Activated T-helper 1 cell treated with anti-CD3 and anti-CD28 coated beads, Interleukin-12 subunit alpha, Interleukin-12 subunit beta, Interleukin-2, Interleukin-4 antibody, amounts not matched to agents 30 ng/mL and 10 ng/mL and 1 ng/mL, durations not matched to agents 14 hours and 24 hours and 36 hours (primary cell): ENCODE measurements at regions of chr9 and their contacts with region 1.

Region 1: GRCh38 chr9:36036780-36037548 is at the start of gene RECK:
- DNase-seq: peak; percentile 84
- H3K4me3 Mint-ChIP-seq: peak within 1 kb of the TSS; percentile 90
- H3K27ac Mint-ChIP-seq: peak within 1 kb of the TSS; percentile 80
- H3K4me1 Mint-ChIP-seq: peaks cover 34% of the 10 kb centered on the region
- H3K27me3 Mint-ChIP-seq: peaks cover 24% of the 10 kb centered on the region
- total RNA-seq, gene RECK: 3.8 and 4.4 TPM in 2 replicates

Region 2: DNA sequence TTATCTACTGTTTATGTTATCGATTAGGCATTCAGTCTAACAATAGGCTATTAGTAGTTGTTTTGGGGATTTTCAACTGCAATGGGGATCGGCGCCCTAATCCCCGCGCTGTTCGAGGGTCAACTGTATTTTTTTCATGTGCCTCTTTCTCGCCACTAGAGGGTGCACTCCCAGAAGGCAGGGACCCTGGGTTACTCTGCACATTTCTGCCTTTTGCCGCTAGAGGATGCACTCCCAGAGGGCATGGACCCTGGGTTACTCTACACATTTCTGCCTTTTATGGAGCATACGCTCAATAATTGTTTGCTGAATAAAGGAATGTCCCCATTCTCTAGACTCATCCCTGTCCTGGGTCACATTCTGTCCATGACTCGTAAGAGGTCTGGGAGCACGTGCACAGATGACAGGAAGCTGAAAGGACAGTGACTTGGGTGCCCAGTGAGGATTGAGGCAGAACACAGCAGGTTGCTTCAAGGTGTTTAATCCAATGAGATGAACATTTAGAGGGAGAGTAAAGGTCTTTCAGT is 28.1 kb before region 1 on chr9:
- intact Hi-C with region 1: loop called (anchors 2 kb)
- DNase-seq: peak; percentile 42
- H3K4me3 Mint-ChIP-seq: no peak overlapping the region
- H3K27ac Mint-ChIP-seq: no peak overlapping the region
- H3K4me1 Mint-ChIP-seq: peaks cover 14% of the 10 kb centered on the region
- H3K27me3 Mint-ChIP-seq: peaks cover 19% of the 10 kb centered on the region

Region 3: GRCh38 chr9:36051317-36051716 is 14.4 kb after region 1 on chr9:
- intact Hi-C with region 1: loop called (anchors 2 kb)
- DNase-seq: no peak
- H3K4me3 Mint-ChIP-seq: no peak overlapping the region
- H3K27ac Mint-ChIP-seq: no peak overlapping the region
- H3K4me1 Mint-ChIP-seq: no peaks in the 10 kb centered on the region
- H3K27me3 Mint-ChIP-seq: no peaks in the 10 kb centered on the region

Region 4: DNA sequence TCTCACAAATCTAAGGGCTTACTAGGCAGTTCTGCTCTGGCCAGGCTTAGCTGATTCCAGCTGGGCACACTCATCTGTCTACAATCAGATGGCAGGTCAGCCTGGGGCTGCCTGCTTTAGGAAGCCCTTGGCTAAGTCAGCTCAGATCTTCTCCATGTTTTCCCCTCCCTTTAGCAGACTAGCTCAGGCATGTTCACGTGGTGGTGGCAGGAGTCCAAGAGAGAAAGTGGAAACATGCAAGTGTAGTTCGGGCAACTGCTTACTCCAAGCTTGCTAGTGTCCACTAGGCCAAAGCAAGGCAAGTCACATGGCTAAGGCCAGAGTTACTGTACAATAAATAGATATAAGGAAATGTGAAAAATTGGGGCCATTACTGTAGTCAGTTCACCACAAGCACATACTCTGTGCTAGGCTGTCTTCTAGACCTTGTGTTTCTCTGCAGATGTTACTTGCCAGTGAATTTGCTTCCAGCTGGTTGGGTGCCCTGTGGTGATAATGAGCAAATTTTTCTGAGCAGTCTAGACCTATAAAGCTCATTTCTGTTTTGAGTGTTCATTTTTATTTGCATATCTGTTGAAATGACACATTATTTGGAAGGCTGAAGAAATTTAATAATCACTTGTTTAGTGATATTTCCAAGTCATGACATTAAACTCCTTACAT is 38.0 kb after region 1 on chr9:
- intact Hi-C with region 1: no loop called
- DNase-seq: no peak
- H3K4me3 Mint-ChIP-seq: no peak overlapping the region
- H3K27ac Mint-ChIP-seq: no peak overlapping the region
- H3K4me1 Mint-ChIP-seq: no peaks in the 10 kb centered on the region
- H3K27me3 Mint-ChIP-seq: no peaks in the 10 kb centered on the region

Region 5: DNA sequence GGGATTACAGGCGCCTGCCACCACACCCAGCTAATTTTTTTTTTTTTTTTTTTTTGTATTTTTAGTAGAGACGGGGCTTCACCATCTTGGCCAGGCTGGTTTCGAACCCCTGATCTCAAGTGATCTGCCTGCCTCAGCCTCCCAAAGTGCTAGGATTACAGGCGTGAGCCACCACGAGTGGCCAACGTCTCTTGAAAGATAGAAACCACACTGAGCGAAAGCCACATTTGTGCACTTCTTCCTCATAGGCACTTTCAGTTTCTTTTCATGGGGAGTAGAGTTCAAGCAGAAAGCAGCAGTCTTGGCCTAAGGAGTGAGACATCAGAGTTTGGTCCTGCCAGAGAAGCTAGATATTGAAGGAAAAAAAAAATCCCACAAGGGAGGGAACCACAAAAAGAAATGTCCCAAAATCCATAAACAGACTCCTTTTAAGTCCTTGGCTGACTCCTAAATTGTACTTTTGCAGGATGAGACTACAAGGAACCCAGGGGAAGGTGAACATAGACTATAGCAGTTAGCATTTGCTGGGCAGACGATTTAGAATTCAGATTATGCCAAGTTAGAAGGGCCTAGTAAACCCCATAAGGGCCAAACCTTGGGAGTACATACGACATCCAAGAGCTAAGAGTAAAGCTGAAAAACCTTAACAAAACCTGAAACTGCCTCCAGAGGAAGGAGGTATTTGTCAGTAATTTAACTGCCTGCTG is 55.7 kb after region 1 on chr9:
- intact Hi-C with region 1: loop called (anchors 5 kb)
- DNase-seq: peak; percentile 49
- H3K4me3 Mint-ChIP-seq: no peak overlapping the region
- H3K27ac Mint-ChIP-seq: peak overlapping the region; percentile 82
- H3K4me1 Mint-ChIP-seq: peaks cover 20% of the 10 kb centered on the region
- H3K27me3 Mint-ChIP-seq: no peaks in the 10 kb centered on the region

Region 6: DNA sequence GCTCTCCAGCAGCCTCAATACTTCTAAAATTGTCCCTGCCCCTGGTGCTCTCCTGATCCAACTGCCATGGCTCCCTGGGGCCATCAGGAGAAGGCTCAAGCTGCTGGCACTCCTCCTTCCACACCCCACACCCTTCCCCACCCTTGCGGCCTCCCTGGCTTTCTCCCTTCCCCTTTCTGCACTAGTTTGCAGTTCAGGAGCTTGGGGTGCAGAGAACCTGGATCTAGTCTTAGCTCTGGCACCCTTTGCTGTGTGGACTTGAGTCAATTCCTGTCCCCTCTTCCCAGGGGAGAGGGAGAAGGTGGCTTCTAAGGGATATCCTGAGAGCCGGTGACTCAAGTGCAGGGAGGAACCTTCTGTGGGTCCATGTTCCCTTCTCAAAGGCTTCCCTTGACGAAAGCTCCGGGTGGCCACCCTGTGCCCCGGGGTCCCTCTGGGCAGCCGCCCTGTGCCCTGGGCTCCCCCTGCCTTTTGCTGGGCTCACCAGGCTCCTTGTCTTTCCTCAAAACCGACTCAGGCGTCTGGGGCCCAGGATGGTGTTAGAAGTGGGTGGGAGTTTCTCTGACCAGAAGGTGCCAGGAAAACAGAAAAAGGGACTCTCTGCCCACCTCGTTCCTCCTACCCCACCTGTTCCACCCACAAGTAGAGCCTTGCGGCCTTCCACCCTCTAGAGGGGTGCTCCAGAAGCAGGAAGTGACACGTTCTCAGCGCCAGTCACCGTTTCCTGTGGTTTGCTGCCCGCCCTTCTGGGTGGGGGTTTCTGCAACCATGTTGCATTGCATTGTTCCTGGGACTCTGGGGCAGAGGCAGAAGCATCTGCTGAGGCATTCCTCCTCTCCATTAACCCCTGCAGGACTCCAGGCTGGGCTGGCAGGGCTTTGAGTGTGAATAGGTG is 114.6 kb after region 1 on chr9:
- intact Hi-C with region 1: loop called (anchors 2 kb)
- DNase-seq: peak; percentile 84
- H3K4me3 Mint-ChIP-seq: peak overlapping the region; percentile 77
- H3K27ac Mint-ChIP-seq: peak overlapping the region; percentile 96
- H3K4me1 Mint-ChIP-seq: peaks cover 64% of the 10 kb centered on the region
- H3K27me3 Mint-ChIP-seq: no peaks in the 10 kb centered on the region

Region 7: DNA sequence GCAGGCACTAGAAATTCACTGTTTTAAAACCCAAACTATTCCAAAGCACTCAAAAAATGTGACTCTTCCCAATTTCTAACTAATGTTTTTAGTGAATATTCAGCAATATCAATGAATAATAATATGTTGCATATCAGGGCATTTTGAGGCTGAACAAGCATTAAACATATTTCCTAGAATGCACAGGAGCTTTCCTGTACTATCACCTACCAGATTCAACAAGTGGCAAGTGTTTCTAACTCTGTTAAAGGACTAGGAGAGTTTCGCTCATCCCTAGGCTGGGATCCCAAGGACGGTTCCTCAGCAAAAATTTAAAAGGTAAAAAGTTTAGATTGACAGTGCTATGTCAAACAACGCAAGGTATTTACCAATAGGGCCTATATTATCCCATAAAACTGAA is 200.3 kb after region 1 on chr9:
- intact Hi-C with region 1: no loop called
- DNase-seq: no peak
- H3K4me3 Mint-ChIP-seq: no peak overlapping the region
- H3K27ac Mint-ChIP-seq: no peak overlapping the region
- H3K4me1 Mint-ChIP-seq: peaks cover 8% of the 10 kb centered on the region
- H3K27me3 Mint-ChIP-seq: no peaks in the 10 kb centered on the region

Region 8: GRCh38 chr9:36258208-36258988 is 221.4 kb after region 1 on chr9 and contains the start of gene GNE:
- intact Hi-C with region 1: loop called (anchors 5 kb)
- DNase-seq: peak; percentile 98
- H3K4me3 Mint-ChIP-seq: peak within 1 kb of the TSS; percentile 96
- H3K27ac Mint-ChIP-seq: peak within 1 kb of the TSS; percentile 96
- H3K4me1 Mint-ChIP-seq: peaks cover 15% of the 10 kb centered on the region
- H3K27me3 Mint-ChIP-seq: no peaks in the 10 kb centered on the region
- total RNA-seq, gene GNE: 21.7 and 22.7 TPM in 2 replicates